B cell (primary cell): ENCODE measurements at regions of chr9 and their contacts with region 1.

Region 1: GRCh38 chr9:127980706-127981558 is at the start of gene EEIG1:
- DNase-seq: peak; percentile 97
- ATAC-seq: peak; percentile 77
- H3K4me3 ChIP-seq: peak within 1 kb of the TSS; percentile 70 to 95 (median 82)
- H3K4me3 Mint-ChIP-seq: peak within 1 kb of the TSS; percentile 97
- H3K27ac ChIP-seq: peak within 1 kb of the TSS; percentile 87 to 93
- H3K27ac Mint-ChIP-seq: peak within 1 kb of the TSS; percentile 98
- H3K4me1 ChIP-seq: peaks cover 66 to 85% of the 10 kb centered on the region in 2 donors
- H3K4me1 Mint-ChIP-seq: peaks cover 68% of the 10 kb centered on the region
- H3K27me3 ChIP-seq: no peaks in the 10 kb centered on the region
- H3K27me3 Mint-ChIP-seq: no peaks in the 10 kb centered on the region
- CTCF ChIP-seq: no peak
- total RNA-seq, gene EEIG1: 245 and 267 TPM in 2 replicates

Region 2: GRCh38 chr9:127943731-127944144 is 37.2 kb before region 1 on chr9:
- CTCF ChIA-PET with region 1: interaction called, 24 read pairs
- POLR2A ChIA-PET with region 1: interaction called, 8 read pairs
- intact Hi-C with region 1: loop called (anchors 2 kb)
- DNase-seq: peak; percentile 86
- ATAC-seq: peak; percentile 88
- H3K4me3 ChIP-seq: no peak overlapping the region
- H3K4me3 Mint-ChIP-seq: no peak overlapping the region
- H3K27ac ChIP-seq: peak overlapping the region; percentile 12 to 54
- H3K27ac Mint-ChIP-seq: peak overlapping the region; percentile 76
- H3K4me1 ChIP-seq: peaks cover 17 to 18% of the 10 kb centered on the region in 2 donors
- H3K4me1 Mint-ChIP-seq: peaks cover 27% of the 10 kb centered on the region
- H3K27me3 ChIP-seq: no peaks in the 10 kb centered on the region
- H3K27me3 Mint-ChIP-seq: no peaks in the 10 kb centered on the region
- CTCF ChIP-seq: peak; percentile 85

Region 3: GRCh38 chr9:127970401-127971313 is 10.3 kb before region 1 on chr9:
- CTCF ChIA-PET with region 1: interaction called, 19 read pairs
- POLR2A ChIA-PET with region 1: interaction called, 28 read pairs
- intact Hi-C with region 1: loop called (anchors 1 kb)
- DNase-seq: peak; percentile 87
- ATAC-seq: peak; percentile 69
- H3K4me3 ChIP-seq: peak overlapping the region in 3 of 5 experiments; percentile 5 to 18 (median 6)
- H3K4me3 Mint-ChIP-seq: peak overlapping the region; percentile 77
- H3K27ac ChIP-seq: peak overlapping the region; percentile 91 to 97
- H3K27ac Mint-ChIP-seq: peak overlapping the region; percentile 96
- H3K4me1 ChIP-seq: peaks cover 99 to 100% of the 10 kb centered on the region in 2 donors
- H3K4me1 Mint-ChIP-seq: peaks cover 98% of the 10 kb centered on the region
- H3K27me3 ChIP-seq: no peaks in the 10 kb centered on the region
- H3K27me3 Mint-ChIP-seq: no peaks in the 10 kb centered on the region
- CTCF ChIP-seq: no peak

Region 4: DNA sequence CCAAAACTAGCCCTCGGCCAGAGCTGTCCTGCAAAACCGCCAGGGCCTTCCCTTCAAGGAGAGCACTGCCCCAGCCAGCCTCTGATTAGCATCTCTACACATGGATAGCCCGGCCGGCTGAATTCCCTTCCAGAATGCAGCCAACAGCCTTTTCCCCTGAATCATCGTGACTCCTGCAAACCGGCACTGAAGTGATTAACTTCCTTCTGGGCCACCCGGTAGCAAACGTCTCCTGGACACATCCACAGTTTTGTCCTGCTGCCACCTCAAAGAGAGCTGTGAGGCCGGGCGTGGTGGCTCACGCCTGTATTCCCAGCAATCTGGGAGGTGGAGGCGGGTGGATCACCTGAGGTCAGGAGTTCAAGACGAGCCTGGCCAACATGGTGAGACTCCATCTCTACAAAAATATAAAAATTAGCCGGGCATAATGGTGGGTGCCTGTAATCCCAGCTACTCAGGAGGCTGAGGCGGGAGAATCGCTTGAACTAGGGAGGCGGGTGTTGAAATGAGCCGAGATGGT is 20.9 kb after region 1 on chr9:
- CTCF ChIA-PET with region 1: interaction called, 7 read pairs
- POLR2A ChIA-PET with region 1: interaction called, 27 read pairs
- intact Hi-C with region 1: loop called (anchors 1 kb)
- DNase-seq: no peak
- ATAC-seq: no peak
- H3K4me3 ChIP-seq: no peak overlapping the region
- H3K4me3 Mint-ChIP-seq: no peak overlapping the region
- H3K27ac ChIP-seq: no peak overlapping the region
- H3K27ac Mint-ChIP-seq: no peak overlapping the region
- H3K4me1 ChIP-seq: peaks cover 33 to 39% of the 10 kb centered on the region in 2 donors
- H3K4me1 Mint-ChIP-seq: peaks cover 30% of the 10 kb centered on the region
- H3K27me3 ChIP-seq: no peaks in the 10 kb centered on the region
- H3K27me3 Mint-ChIP-seq: no peaks in the 10 kb centered on the region
- CTCF ChIP-seq: no peak

Region 5: DNA sequence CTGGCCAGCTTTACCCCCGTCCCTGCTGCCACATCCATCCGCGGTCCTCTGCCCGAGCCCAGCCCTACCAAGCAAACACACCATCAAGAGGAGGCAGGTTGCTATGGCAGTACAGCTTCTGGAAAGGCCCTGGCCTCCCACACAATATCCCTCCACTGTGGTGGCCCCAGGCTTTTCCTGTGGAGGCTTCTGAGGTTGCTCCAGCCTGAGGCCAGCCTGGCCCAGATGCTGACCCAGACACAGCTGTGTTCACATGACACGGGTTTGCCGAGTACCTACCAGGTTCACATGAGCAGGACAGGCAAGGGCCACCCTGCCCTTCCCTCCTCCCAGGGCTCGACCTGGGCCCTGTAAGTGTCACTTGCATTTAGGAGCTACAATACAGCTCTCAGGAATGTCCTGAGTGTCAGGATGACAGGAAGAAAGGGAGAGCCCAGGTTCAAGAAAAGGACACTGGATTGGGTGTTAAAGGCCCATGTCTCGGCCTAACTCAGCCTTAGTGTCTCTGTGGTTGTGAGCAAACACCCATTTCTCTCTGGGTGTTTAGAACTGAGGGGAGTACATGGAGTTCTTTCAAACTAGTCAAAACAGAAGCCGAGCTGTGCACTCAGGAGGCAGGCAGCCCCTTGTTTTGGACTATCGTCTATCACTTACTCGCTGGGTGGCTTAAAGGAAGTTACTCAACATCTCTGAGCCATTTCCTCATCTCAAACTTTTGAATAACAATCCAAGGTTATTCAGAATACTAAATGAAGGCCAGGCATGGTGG is 46.0 kb after region 1 on chr9:
- CTCF ChIA-PET with region 1: interaction called, 282 read pairs
- POLR2A ChIA-PET with region 1: interaction called, 212 read pairs
- intact Hi-C with region 1: loop called (anchors 1 kb)
- DNase-seq: no peak
- ATAC-seq: peak; percentile 4
- H3K4me3 ChIP-seq: peak overlapping the region in 1 of 5 experiments; percentile 22
- H3K4me3 Mint-ChIP-seq: peak overlapping the region; percentile 81
- H3K27ac ChIP-seq: peak overlapping the region; percentile 88 to 100
- H3K27ac Mint-ChIP-seq: peak overlapping the region; percentile 96
- H3K4me1 ChIP-seq: peaks cover 73 to 94% of the 10 kb centered on the region in 2 donors
- H3K4me1 Mint-ChIP-seq: peaks cover 78% of the 10 kb centered on the region
- H3K27me3 ChIP-seq: no peaks in the 10 kb centered on the region
- H3K27me3 Mint-ChIP-seq: no peaks in the 10 kb centered on the region
- CTCF ChIP-seq: no peak

Region 6: DNA sequence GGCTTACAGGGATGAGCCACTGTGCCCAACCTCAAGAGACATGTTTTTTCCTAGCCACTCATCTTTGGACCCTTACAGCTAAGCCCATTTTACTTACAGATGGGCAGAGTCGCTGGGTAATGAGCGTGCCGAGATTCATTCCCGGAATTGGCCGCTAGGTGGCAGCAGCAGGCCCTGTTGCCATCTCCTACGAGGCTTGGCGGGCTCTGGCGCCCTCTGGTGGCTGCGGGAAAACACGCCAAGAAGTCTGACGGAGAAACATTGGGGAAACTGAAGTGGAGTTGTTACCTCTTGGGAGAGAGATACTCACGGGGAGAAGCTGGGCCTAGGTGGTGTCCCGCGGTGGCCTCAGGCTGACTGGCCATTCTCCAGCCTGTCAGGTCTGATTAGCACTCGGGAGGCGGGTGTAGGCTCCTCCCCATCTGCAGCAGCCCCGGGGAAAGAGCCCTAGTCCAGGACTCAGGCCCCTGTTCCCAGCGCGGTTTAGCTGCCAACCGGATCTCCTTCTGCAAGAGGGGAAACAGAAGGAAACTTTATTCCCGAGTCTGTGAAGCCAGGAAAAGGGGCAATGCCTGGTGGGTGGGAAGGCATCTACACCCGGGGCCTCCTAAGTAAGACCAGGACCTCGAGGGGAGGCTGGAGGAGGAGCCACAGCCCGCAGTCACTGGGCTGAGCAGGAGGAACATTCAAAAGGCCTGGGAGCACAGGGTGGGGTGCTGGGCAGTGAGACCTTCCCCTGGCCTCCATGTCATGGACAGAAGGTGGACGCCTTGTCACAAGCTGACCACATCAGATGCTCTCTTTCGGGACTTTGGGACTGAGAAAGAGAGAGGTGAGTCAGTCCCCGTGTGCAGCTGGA is 136.9 kb after region 1 on chr9:
- CTCF ChIA-PET with region 1: interaction called, 7 read pairs
- POLR2A ChIA-PET with region 1: interaction called, 8 read pairs
- intact Hi-C with region 1: loop called (anchors 5 kb)
- DNase-seq: peak; percentile 94
- ATAC-seq: peak; percentile 52
- H3K4me3 ChIP-seq: no peak overlapping the region
- H3K4me3 Mint-ChIP-seq: no peak overlapping the region
- H3K27ac ChIP-seq: no peak overlapping the region
- H3K27ac Mint-ChIP-seq: peak overlapping the region; percentile 78
- H3K4me1 ChIP-seq: peaks cover 37 to 42% of the 10 kb centered on the region in 2 donors
- H3K4me1 Mint-ChIP-seq: peaks cover 38% of the 10 kb centered on the region
- H3K27me3 ChIP-seq: no peaks in the 10 kb centered on the region
- H3K27me3 Mint-ChIP-seq: no peaks in the 10 kb centered on the region
- CTCF ChIP-seq: peak; percentile 100

Region 7: GRCh38 chr9:128940271-128940921 is 959.5 kb after region 1 on chr9:
- CTCF ChIA-PET with region 1: no interaction called
- POLR2A ChIA-PET with region 1: no interaction called
- intact Hi-C with region 1: no loop called
- DNase-seq: no peak
- ATAC-seq: no peak
- H3K4me3 ChIP-seq: no peak overlapping the region
- H3K4me3 Mint-ChIP-seq: no peak overlapping the region
- H3K27ac ChIP-seq: no peak overlapping the region
- H3K27ac Mint-ChIP-seq: no peak overlapping the region
- H3K4me1 ChIP-seq: no peaks in the 10 kb centered on the region
- H3K4me1 Mint-ChIP-seq: no peaks in the 10 kb centered on the region
- H3K27me3 ChIP-seq: no peaks in the 10 kb centered on the region
- H3K27me3 Mint-ChIP-seq: no peaks in the 10 kb centered on the region
- CTCF ChIP-seq: no peak